ENCODE measurements at regions of chr3 and their contacts with region 1.

Region 1: DNA sequence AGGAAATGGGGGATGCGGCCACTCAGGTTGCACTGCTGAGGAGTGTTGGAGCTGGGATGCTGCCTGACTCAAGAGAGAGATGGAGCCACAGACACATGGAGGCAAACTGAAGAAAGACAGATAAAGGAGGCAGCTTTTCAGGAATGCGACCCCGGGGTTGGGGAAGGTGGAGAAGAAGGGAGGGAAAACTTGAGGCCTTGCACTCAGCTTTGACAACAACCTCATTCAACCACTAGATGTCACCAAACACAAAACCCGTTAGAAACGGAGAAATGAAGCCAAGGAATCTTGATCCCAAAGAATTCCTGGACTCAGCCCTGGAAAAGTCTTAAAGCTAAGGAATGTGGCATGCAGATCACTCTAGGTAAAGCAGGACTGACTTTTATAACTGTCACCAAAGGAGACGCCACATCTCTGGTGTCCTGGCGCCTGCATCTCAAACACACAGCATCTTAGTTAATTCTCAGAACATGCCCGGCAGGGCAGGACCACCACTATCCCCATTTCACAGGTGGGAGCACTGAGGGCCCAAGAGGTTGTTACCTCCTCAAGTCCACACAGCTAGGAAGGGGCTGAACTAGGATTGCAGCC is 59.6 kb upstream of the LMCD1 start:
- DNase-seq: peak; percentile 79
- H3K4me3 ChIP-seq: no peak overlapping the region; a peak in 1 of 4 replicates
- H3K27ac ChIP-seq: peak overlapping the region; percentile 96 to 98
- H3K4me1 ChIP-seq: peaks cover 33 to 40% of the 10 kb centered on the region in 2 experiments
- H3K27me3 ChIP-seq: no peaks in the 10 kb centered on the region
- CTCF ChIP-seq: peak; percentile 82
- EP300 ChIP-seq: no peak
- RAD21 ChIP-seq: peak; percentile 84

Region 2: DNA sequence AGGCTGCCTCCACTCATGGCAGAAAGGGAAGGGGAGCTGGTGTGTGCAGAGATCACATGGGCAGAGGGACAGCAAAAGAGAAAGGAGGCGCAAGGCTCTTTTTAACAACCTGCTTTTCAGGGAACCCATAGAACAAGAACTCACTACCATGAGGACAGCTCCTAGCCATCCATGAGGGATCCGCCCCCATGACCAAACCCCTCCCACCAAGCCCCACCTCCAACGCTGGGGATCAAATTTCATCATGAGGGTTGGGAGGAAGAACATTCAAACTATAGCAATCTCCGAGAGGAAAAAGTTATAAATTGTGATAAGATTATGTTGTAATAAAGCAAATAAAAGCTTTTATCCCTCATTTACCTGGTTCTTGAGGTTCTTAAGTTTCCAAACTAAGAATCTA is 25.1 kb before region 1 on chr3:
- CTCF ChIA-PET with region 1: interaction called, 14 read pairs
- POLR2A ChIA-PET with region 1: no interaction called
- DNase-seq: no peak
- H3K4me3 ChIP-seq: 0 out of 4 replicates have a peak overlapping the region, but pooled peaks of 1 of the 2 experiments have one; percentile 30
- H3K27ac ChIP-seq: no peak overlapping the region
- H3K4me1 ChIP-seq: peaks cover 0 to 18% of the 10 kb centered on the region in 2 experiments; a peak in 2 of 4 replicates
- H3K27me3 ChIP-seq: no peaks in the 10 kb centered on the region
- CTCF ChIP-seq: no peak
- EP300 ChIP-seq: no peak
- RAD21 ChIP-seq: no peak

Region 3: DNA sequence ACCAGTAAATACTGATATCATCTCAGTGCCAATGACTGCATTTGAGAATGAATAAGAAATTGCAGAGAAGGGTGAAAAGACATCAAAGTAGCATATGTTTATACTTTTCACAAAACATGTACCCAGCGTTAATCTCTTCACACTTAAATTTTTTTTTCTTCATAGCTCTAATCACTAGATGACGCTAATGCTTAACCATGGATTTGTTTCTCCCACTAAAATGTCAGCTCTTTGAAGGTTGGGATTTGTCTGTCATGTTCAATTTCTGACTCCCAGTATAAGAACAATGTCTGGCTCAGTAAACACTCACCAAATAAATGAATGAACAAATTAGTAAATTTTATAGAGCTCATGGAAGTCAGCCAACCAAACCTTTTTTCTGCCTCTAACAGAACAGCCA is 18.8 kb before region 1 on chr3:
- CTCF ChIA-PET with region 1: interaction called, 14 read pairs
- POLR2A ChIA-PET with region 1: no interaction called
- DNase-seq: no peak
- H3K4me3 ChIP-seq: no peak overlapping the region
- H3K27ac ChIP-seq: no peak overlapping the region; a peak in 1 of 4 replicates
- H3K4me1 ChIP-seq: peaks cover 0 to 18% of the 10 kb centered on the region in 2 experiments; a peak in 2 of 4 replicates
- H3K27me3 ChIP-seq: no peaks in the 10 kb centered on the region
- CTCF ChIP-seq: no peak
- EP300 ChIP-seq: no peak
- RAD21 ChIP-seq: peak; percentile 25; the same call in 1 of the 2 replicates

Region 4: GRCh38 chr3:8575364-8576104 is 133.5 kb after region 1 on chr3:
- CTCF ChIA-PET with region 1: interaction called, 10 read pairs
- POLR2A ChIA-PET with region 1: no interaction called
- DNase-seq: no peak
- H3K4me3 ChIP-seq: no peak overlapping the region
- H3K27ac ChIP-seq: no peak overlapping the region
- H3K4me1 ChIP-seq: peaks cover 0 to 10% of the 10 kb centered on the region in 2 experiments; a peak in 1 of 4 replicates
- H3K27me3 ChIP-seq: no peaks in the 10 kb centered on the region
- CTCF ChIP-seq: no peak
- EP300 ChIP-seq: no peak
- RAD21 ChIP-seq: no peak

Region 5: GRCh38 chr3:8607234-8608040 is 165.4 kb after region 1 on chr3:
- CTCF ChIA-PET with region 1: interaction called, 76 read pairs
- POLR2A ChIA-PET with region 1: interaction called, 3 read pairs
- DNase-seq: peak; percentile 82
- H3K4me3 ChIP-seq: no peak overlapping the region
- H3K27ac ChIP-seq: peak overlapping the region in 1 of 2 experiments; percentile 97; a peak in 2 of 4 replicates
- H3K4me1 ChIP-seq: peaks cover 5 to 44% of the 10 kb centered on the region in 2 experiments; a peak in 3 of 4 replicates
- H3K27me3 ChIP-seq: no peaks in the 10 kb centered on the region
- CTCF ChIP-seq: peak; percentile 66
- EP300 ChIP-seq: peak in 1 of 2 experiments; percentile 78; a peak in 2 of 4 replicates
- RAD21 ChIP-seq: peak; percentile 96

Region 6: DNA sequence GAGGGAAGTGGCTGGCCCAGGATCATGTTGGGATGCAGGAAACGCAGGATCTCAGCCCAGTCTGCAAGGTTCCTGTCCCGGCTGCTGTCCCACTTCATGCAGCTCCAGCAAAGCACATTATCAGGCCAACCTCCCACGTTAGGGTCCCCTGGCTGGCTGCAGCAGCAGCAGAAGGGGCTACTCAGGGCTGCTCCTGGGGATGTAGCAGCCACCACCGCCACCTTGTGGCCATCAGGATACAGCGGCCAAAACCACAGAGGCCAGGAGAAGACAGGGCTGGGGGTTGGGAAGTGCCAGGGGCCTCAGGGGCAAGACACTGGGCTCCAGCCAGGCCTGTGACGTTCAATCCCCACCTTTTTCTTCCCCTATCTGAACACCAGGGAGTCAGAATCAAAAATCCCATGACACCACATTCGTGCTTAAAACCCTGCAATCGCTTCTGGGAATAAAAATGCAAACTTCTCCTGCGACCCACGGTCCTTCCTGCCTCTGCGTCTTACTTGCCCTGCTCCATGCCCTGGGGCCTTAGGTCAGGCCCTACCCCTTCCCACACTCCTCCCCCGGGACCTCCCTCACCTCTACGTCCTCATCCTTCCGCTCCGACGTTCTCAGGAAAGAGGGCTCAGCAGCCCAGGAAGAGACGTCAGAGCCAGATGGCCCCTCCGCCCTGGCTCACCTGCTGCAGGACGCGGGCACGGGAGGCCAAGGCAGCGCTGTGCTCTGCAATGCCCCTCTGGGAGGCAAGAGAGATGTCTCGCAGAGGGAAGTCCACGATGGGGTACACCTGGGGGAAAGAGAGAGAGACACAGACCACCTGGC is 181.0 kb after region 1 on chr3:
- CTCF ChIA-PET with region 1: interaction called, 52 read pairs
- POLR2A ChIA-PET with region 1: no interaction called
- DNase-seq: peak; percentile 93
- H3K4me3 ChIP-seq: no peak overlapping the region; a peak in 1 of 4 replicates
- H3K27ac ChIP-seq: peak overlapping the region in 1 of 2 experiments; percentile 68; a peak in 2 of 4 replicates
- H3K4me1 ChIP-seq: peaks cover 0 to 26% of the 10 kb centered on the region in 2 experiments; a peak in 1 of 4 replicates
- H3K27me3 ChIP-seq: no peaks in the 10 kb centered on the region
- CTCF ChIP-seq: peak; percentile 94
- EP300 ChIP-seq: no peak
- RAD21 ChIP-seq: peak; percentile 93

Region 7: DNA sequence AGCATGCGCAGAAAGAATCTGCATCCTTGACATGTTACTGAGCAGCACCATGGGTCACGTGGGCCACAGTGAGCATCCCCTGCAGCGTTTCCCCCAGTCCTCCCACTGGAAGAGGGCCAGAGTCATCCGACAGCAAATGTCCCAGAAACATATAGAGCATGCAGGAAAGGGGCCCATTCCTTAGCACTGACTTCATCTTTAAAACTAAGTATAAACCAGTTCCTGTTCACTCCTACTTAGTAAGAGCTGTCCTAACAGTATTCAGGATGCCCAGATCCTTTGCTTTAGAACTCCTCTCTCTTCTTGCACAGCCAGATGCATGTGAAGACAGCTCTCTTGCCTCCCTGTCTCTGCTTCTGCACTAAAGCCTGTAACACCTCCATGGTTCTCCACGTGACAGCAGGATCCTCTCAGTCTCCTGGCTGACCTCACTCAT is 406.6 kb after region 1 on chr3:
- CTCF ChIA-PET with region 1: no interaction called
- POLR2A ChIA-PET with region 1: no interaction called
- DNase-seq: no peak
- H3K4me3 ChIP-seq: no peak overlapping the region
- H3K27ac ChIP-seq: peak overlapping the region; percentile 48 to 76; a peak in 3 of 4 replicates
- H3K4me1 ChIP-seq: peaks cover 7 to 19% of the 10 kb centered on the region in 2 experiments; a peak in 3 of 4 replicates
- H3K27me3 ChIP-seq: no peaks in the 10 kb centered on the region
- CTCF ChIP-seq: no peak
- EP300 ChIP-seq: no peak; a peak in 1 of 4 replicates
- RAD21 ChIP-seq: no peak